Caco-2 (cell line): ENCODE measurements at regions of chr20 and their contacts with region 1.

Region 1: GRCh38 chr20:63864847-63865640 is at the start of gene TPD52L2:
- DNase-seq: peak; percentile 100
- H3K4me3 ChIP-seq: peak within 1 kb of the TSS; percentile 97
- H3K4me3 Mint-ChIP-seq: peak within 1 kb of the TSS; percentile 90
- H3K27ac Mint-ChIP-seq: peak within 1 kb of the TSS; percentile 91
- H3K4me1 ChIP-seq: peaks cover 15% of the 10 kb centered on the region
- H3K4me1 Mint-ChIP-seq: peaks cover 8% of the 10 kb centered on the region
- H3K27me3 ChIP-seq: no peaks in the 10 kb centered on the region
- H3K27me3 Mint-ChIP-seq: no peaks in the 10 kb centered on the region
- CTCF ChIP-seq: no peak
- total RNA-seq, gene TPD52L2: 286 and 293 TPM in 2 replicates

Region 2: GRCh38 chr20:63537525-63538203 is 327.4 kb before region 1 on chr20:
- CTCF ChIA-PET with region 1: interaction called, 9 read pairs
- POLR2A ChIA-PET with region 1: no interaction called
- intact Hi-C with region 1: loop called (anchors 1 kb)
- DNase-seq: peak; percentile 94 to 97
- H3K4me3 ChIP-seq: peak overlapping the region; percentile 50
- H3K4me3 Mint-ChIP-seq: peak overlapping the region; percentile 65
- H3K27ac Mint-ChIP-seq: peak overlapping the region; percentile 36
- H3K4me1 ChIP-seq: peaks cover 28% of the 10 kb centered on the region
- H3K4me1 Mint-ChIP-seq: no peaks in the 10 kb centered on the region
- H3K27me3 ChIP-seq: no peaks in the 10 kb centered on the region
- H3K27me3 Mint-ChIP-seq: no peaks in the 10 kb centered on the region
- CTCF ChIP-seq: peak; percentile 99 to 100

Region 3: GRCh38 chr20:63657937-63658748 is 206.9 kb before region 1 on chr20 and contains the start of gene RTEL1:
- CTCF ChIA-PET with region 1: interaction called, 3 read pairs
- POLR2A ChIA-PET with region 1: interaction called, 12 read pairs
- intact Hi-C with region 1: no loop called
- DNase-seq: peak; percentile 96 to 99
- H3K4me3 ChIP-seq: peak within 1 kb of the TSS; percentile 82
- H3K4me3 Mint-ChIP-seq: peak within 1 kb of the TSS; percentile 86
- H3K27ac Mint-ChIP-seq: peak within 1 kb of the TSS; percentile 77
- H3K4me1 ChIP-seq: peaks cover 10% of the 10 kb centered on the region
- H3K4me1 Mint-ChIP-seq: peaks cover 15% of the 10 kb centered on the region
- H3K27me3 ChIP-seq: no peaks in the 10 kb centered on the region
- H3K27me3 Mint-ChIP-seq: no peaks in the 10 kb centered on the region
- CTCF ChIP-seq: no peak
- total RNA-seq, gene RTEL1: 51.1 and 61.6 TPM in 2 replicates

Region 4: DNA sequence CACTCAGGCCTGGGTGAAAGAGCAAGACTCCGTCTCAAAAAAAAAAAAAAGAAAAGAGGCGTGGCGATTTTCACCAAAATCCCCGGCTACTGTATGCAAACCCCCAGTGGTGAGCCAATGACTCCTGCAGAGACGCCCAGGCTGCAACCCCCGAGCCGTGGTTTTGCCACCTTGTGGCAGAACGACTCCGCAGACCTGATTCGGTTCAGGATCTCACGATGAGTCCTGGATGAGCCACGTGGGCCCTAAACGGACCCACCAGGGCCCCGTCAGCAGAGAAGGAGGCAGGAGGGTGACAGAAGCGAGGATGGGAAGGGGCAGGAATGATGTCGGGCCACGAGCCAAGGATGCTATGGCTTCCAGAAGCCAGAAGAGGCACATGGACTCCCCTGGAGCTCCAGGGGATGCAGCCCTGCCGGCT is 83.0 kb before region 1 on chr20:
- CTCF ChIA-PET with region 1: interaction called, 20 read pairs
- POLR2A ChIA-PET with region 1: interaction called, 9 read pairs
- intact Hi-C with region 1: loop called (anchors 1 kb)
- DNase-seq: no peak
- H3K4me3 ChIP-seq: no peak overlapping the region
- H3K4me3 Mint-ChIP-seq: no peak overlapping the region
- H3K27ac Mint-ChIP-seq: no peak overlapping the region
- H3K4me1 ChIP-seq: no peaks in the 10 kb centered on the region
- H3K4me1 Mint-ChIP-seq: no peaks in the 10 kb centered on the region
- H3K27me3 ChIP-seq: no peaks in the 10 kb centered on the region
- H3K27me3 Mint-ChIP-seq: no peaks in the 10 kb centered on the region
- CTCF ChIP-seq: peak; percentile 20 to 36

Region 5: GRCh38 chr20:63846128-63846798 is 18.8 kb before region 1 on chr20:
- CTCF ChIA-PET with region 1: interaction called, 12 read pairs
- POLR2A ChIA-PET with region 1: interaction called, 7 read pairs
- intact Hi-C with region 1: no loop called
- DNase-seq: peak; percentile 78 to 92
- H3K4me3 ChIP-seq: peak overlapping the region; percentile 15; the same call in 1 of the 2 replicates
- H3K4me3 Mint-ChIP-seq: peak overlapping the region; percentile 37
- H3K27ac Mint-ChIP-seq: peak overlapping the region; percentile 19
- H3K4me1 ChIP-seq: peaks cover 27% of the 10 kb centered on the region
- H3K4me1 Mint-ChIP-seq: no peaks in the 10 kb centered on the region
- H3K27me3 ChIP-seq: no peaks in the 10 kb centered on the region
- H3K27me3 Mint-ChIP-seq: peaks cover 3% of the 10 kb centered on the region
- CTCF ChIP-seq: no peak

Region 6: DNA sequence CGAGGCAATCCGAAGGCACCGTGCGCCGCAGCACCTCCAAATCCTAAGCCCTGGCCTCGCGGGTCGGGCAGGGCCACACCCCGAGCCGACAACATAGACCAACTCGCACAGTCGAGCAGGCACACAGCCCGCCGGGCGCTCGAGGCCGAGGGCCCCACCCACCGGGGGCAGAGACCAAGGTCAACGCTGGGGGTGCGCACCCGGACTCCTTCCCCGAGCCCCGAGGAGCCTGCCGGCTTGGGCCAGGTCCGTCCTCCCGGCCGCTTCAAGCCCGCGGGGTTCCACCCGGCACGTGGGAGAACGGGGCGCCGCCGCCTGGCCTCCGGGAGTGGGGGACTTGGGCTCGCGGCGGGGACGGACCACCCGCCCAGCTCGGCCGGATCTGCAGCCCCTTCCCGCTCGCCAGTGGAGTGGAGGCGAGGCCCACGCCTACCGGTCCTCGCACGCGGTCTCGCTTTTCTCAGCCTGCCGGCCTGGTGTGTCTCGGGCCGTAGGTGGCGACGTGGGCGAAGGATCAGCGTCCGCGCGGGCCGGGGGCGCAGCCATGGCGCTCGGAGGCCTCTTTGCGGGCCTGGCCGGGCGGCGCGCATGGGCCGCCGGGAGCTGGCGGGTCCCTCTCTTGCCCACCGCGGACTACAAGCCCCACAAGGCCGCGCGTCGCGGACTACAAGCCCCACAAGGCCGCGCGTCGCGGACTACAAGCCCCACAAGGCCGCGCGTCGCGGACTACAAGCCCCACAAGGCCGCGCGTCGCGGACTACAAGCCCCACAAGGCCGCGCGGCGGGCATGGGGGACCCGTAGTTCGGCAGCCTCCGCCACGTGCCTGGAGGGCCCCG is 91.0 kb after region 1 on chr20 and contains the start of gene UCKL1:
- CTCF ChIA-PET with region 1: interaction called, 8 read pairs
- POLR2A ChIA-PET with region 1: interaction called, 24 read pairs
- intact Hi-C with region 1: loop called (anchors 2 kb)
- DNase-seq: peak; percentile 97 to 99
- H3K4me3 ChIP-seq: peak within 1 kb of the TSS; percentile 99
- H3K4me3 Mint-ChIP-seq: peak within 1 kb of the TSS; percentile 89
- H3K27ac Mint-ChIP-seq: peak within 1 kb of the TSS; percentile 94
- H3K4me1 ChIP-seq: peaks cover 22% of the 10 kb centered on the region
- H3K4me1 Mint-ChIP-seq: peaks cover 43% of the 10 kb centered on the region
- H3K27me3 ChIP-seq: no peaks in the 10 kb centered on the region
- H3K27me3 Mint-ChIP-seq: no peaks in the 10 kb centered on the region
- CTCF ChIP-seq: peak in 1 of 2 experiments; percentile 34
- total RNA-seq, gene UCKL1: 101 and 113 TPM in 2 replicates

Region 7: DNA sequence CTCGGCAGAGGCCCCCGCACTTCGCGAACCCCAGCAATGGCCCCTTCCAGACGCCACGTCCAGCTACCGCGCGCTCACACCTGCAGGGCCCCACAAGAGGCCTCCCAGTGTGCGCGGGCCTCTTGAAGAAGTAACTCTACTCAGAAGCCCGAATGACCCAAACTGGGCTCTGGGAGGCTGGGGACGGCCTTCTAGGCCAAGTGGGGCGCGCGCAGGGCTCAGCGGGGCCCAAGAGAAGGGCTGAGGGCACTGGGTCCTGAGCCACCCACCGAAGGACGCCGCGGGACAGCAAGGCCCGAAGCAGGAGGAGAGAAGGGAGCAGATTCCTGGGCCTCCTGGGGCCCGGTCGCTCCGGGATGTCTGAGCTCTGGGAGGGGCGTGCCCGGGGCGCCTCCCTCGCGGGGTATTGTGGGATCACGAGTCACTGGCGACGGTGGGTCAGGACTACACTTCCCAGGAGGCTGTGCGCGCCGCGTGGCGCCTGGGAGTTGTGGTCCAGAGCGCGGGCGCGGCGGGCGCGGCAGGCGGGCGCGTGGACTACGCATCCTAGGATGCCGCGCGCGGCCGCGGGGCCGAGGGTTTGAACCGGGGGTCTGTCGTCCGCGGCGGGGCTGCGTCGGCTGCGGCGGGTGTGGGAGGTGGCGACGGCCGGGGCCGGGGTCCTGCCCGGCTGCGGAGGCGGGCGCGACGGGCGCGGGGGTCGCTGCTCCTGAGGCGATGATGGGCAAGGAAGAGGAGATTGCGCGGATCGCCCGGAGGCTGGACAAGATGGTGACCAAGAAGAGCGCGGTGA is 197.7 kb after region 1 on chr20 and contains the start of gene TCEA2:
- CTCF ChIA-PET with region 1: interaction called, 3 read pairs
- POLR2A ChIA-PET with region 1: interaction called, 11 read pairs
- intact Hi-C with region 1: no loop called
- DNase-seq: peak; percentile 99 to 100
- H3K4me3 ChIP-seq: peak within 1 kb of the TSS; percentile 74
- H3K4me3 Mint-ChIP-seq: peak within 1 kb of the TSS; percentile 81
- H3K27ac Mint-ChIP-seq: peak within 1 kb of the TSS; percentile 16
- H3K4me1 ChIP-seq: peaks cover 23% of the 10 kb centered on the region
- H3K4me1 Mint-ChIP-seq: peaks cover 28% of the 10 kb centered on the region
- H3K27me3 ChIP-seq: no peaks in the 10 kb centered on the region
- H3K27me3 Mint-ChIP-seq: no peaks in the 10 kb centered on the region
- CTCF ChIP-seq: no peak
- total RNA-seq, gene TCEA2: 39.9 and 48.3 TPM in 2 replicates

Region 8: DNA sequence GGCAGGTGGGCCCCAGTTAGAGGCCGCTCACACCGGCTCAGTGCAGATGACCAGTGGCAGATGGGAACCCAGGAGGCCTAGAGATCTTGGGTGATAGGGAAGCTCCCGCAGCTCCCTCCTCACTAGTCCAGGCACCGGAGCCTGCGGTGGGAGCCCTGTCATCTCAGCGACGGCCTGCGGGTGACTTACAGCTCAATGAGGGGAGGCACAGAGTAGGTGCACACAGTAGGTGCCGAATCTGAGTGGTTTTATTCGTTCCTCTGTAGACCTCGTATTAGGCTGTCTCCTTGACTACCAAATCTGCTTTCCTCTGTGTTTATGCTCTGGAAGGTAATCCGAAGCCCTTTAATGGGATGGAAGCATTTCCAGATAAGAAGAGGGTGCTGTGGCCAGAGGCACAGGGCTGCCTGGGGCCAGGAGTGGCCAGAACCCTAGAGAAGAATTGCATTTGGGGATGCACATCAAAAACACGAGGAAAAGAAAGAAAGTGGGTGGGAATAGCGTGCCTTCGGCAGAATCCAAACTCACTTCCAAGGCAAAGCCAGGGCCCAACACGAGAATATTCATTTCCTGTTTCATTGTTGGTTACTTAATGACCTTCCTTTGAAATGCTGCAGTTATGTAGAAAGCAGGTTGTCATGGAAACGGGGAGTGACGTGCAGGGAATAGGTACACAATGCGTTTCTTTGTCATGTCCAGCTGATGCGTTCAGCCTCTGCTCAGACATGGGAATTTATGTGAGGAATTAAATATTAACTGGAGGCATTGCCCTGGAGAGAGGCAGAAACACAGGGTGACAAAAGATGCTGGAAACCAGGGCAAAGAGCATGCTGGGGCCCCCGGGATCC is 323.9 kb after region 1 on chr20:
- CTCF ChIA-PET with region 1: no interaction called
- POLR2A ChIA-PET with region 1: no interaction called
- intact Hi-C with region 1: no loop called
- DNase-seq: peak; percentile 86 to 95
- H3K4me3 ChIP-seq: no peak overlapping the region
- H3K4me3 Mint-ChIP-seq: peak overlapping the region; percentile 46
- H3K27ac Mint-ChIP-seq: peak overlapping the region; percentile 69
- H3K4me1 ChIP-seq: peaks cover 22% of the 10 kb centered on the region
- H3K4me1 Mint-ChIP-seq: peaks cover 21% of the 10 kb centered on the region
- H3K27me3 ChIP-seq: no peaks in the 10 kb centered on the region
- H3K27me3 Mint-ChIP-seq: peaks cover 12% of the 10 kb centered on the region
- CTCF ChIP-seq: no peak